A549 (cell line): ENCODE measurements at regions of chr1 and their contacts with region 1.

Region 1: GRCh38 chr1:115138968-115139367 is 49.7 kb upstream of the TSPAN2 start:
- DNase-seq: peak; percentile 63 to 90
- ATAC-seq: peak; percentile 84 to 95
- H3K4me3 ChIP-seq: no peak overlapping the region
- H3K27ac ChIP-seq: peak overlapping the region; percentile 62 to 88
- H3K4me1 ChIP-seq: peaks cover 34% of the 10 kb centered on the region
- CTCF ChIP-seq: peak; percentile 80
- EP300 ChIP-seq: no peak
- POLR2A ChIP-seq: no peak
- RAD21 ChIP-seq: peak; percentile 96 to 98

Region 2: GRCh38 chr1:115179397-115179835 is 40.4 kb after region 1 on chr1:
- CTCF ChIA-PET with region 1: interaction called, 26 read pairs
- POLR2A ChIA-PET with region 1: interaction called, 3 read pairs
- DNase-seq: peak; percentile 67 to 89
- ATAC-seq: peak; percentile 93 to 94
- H3K4me3 ChIP-seq: no peak overlapping the region
- H3K27ac ChIP-seq: peak overlapping the region; percentile 86 to 89
- H3K4me1 ChIP-seq: peaks cover 31% of the 10 kb centered on the region
- CTCF ChIP-seq: no peak
- EP300 ChIP-seq: peak; percentile 30 to 77; a peak in 3 of 5 replicates
- POLR2A ChIP-seq: no peak
- RAD21 ChIP-seq: peak; percentile 17 to 29; a peak in 4 of 5 replicates

Region 3: GRCh38 chr1:115291731-115292130 is 152.8 kb after region 1 on chr1:
- CTCF ChIA-PET with region 1: interaction called, 10 read pairs
- POLR2A ChIA-PET with region 1: no interaction called
- DNase-seq: no peak
- ATAC-seq: no peak
- H3K4me3 ChIP-seq: no peak overlapping the region
- H3K27ac ChIP-seq: no peak overlapping the region
- H3K4me1 ChIP-seq: no peaks in the 10 kb centered on the region
- CTCF ChIP-seq: no peak
- EP300 ChIP-seq: no peak
- POLR2A ChIP-seq: no peak
- RAD21 ChIP-seq: no peak

Region 4: DNA sequence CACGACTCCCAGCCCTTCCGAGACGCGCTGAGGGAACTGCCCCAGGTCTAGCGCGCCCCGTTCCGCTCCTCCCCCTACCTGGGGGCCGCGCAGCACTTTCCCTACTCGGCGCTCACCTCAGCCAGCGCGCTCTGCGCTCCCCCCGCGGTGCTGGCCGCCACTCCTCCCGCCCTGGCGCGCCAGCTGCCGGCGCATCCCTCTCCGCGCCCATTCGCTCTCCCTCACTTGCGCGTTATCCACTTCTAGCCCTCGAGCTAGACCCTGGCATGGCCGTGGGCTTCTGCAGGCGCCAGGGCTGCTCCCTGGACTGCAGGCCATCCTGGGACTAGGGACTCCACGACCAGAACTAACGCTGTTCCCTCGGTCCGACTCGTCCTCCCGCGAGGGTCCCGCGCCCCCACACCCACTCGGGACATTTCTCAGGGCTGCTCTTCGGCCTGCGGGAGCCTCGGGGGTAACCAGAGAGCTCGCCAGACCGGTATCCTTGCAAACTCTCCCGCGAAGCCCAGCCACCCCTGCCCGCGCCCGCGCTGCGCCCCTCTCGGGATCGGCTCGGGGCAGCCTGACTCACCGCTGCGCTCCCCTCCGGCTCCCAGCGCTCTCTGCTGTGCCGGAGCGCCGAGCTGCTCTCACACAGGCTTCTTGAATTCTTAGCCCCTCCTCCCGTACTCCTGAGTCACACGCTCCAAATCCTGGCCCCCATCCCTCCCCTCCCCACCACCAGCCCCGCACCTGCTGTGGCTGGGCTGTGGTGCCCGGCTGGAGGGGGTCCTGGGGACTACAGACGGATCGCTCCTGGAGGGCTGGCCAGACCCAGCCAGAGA is 198.9 kb after region 1 on chr1 and contains the start of gene NGF:
- CTCF ChIA-PET with region 1: interaction called, 19 read pairs
- POLR2A ChIA-PET with region 1: no interaction called
- DNase-seq: peak; percentile 27 to 49
- ATAC-seq: peak; percentile 84 to 93
- H3K4me3 ChIP-seq: peak within 1 kb of the TSS; percentile 71
- H3K27ac ChIP-seq: peak within 1 kb of the TSS; percentile 67 to 91
- H3K4me1 ChIP-seq: peaks cover 8% of the 10 kb centered on the region; the same call in 2 of the 3 replicates
- CTCF ChIP-seq: no peak
- EP300 ChIP-seq: no peak
- POLR2A ChIP-seq: no peak
- RAD21 ChIP-seq: no peak
- polyA plus RNA-seq, gene NGF: 0.71 TPM in 2 replicates

Region 5: GRCh38 chr1:115469703-115470476 is 330.9 kb after region 1 on chr1:
- CTCF ChIA-PET with region 1: interaction called, 171 read pairs
- POLR2A ChIA-PET with region 1: no interaction called
- DNase-seq: peak; percentile 41 to 43
- ATAC-seq: peak; percentile 75 to 90
- H3K4me3 ChIP-seq: no peak overlapping the region
- H3K27ac ChIP-seq: peak overlapping the region; percentile 33 to 72; a peak in 2 of 6 replicates
- H3K4me1 ChIP-seq: peaks cover 8% of the 10 kb centered on the region
- CTCF ChIP-seq: peak; percentile 69
- EP300 ChIP-seq: no peak
- POLR2A ChIP-seq: no peak
- RAD21 ChIP-seq: peak; percentile 88 to 89

Region 6: DNA sequence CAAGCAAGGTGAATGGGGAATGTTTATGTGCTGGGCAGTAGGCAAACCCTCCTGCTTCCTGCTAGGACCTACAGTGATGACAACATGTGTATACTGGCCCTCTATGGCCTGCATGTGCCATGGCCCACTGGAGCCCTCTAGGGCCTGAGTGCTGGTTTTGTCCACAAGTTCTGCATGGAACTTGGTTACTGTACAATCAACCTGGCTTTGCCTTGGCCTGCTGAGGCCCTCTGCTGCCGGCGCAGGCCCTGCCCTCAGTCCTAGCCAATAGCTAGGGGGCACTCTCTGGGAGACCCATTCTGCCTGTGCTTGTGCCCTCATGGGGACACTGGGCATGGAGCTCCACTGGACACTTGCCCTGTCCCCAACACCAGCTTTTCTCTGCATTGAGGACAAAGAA is 337.6 kb after region 1 on chr1:
- CTCF ChIA-PET with region 1: interaction called, 171 read pairs
- POLR2A ChIA-PET with region 1: no interaction called
- DNase-seq: peak in 1 of 2 experiments; percentile 25
- ATAC-seq: peak in 1 of 2 experiments; percentile 71; a peak in 3 of 6 replicates
- H3K4me3 ChIP-seq: no peak overlapping the region
- H3K27ac ChIP-seq: no peak overlapping the region
- H3K4me1 ChIP-seq: no peaks in the 10 kb centered on the region
- CTCF ChIP-seq: peak; percentile 12; the same call in 1 of the 3 replicates
- EP300 ChIP-seq: no peak
- POLR2A ChIP-seq: no peak
- RAD21 ChIP-seq: no peak; a peak in 1 of 5 replicates